Left lung (tissue), 14 donors: ENCODE measurements at regions of chr1 and their contacts with region 1.

Region 1: GRCh38 chr1:109910123-109910962 is at the start of gene CSF1:
- DNase-seq: peak; percentile 80 to 89 (median 83)
- ATAC-seq: peak; percentile 76
- H3K4me3 ChIP-seq: peak within 1 kb of the TSS; percentile 75
- H3K27ac ChIP-seq: peak within 1 kb of the TSS; percentile 68 to 81
- H3K4me1 ChIP-seq: peaks cover 13 to 74% of the 10 kb centered on the region in 2 donors
- H3K27me3 ChIP-seq: peaks cover 0 to 26% of the 10 kb centered on the region in 2 donors
- CTCF ChIP-seq: no peak
- polyA plus RNA-seq, gene CSF1: 6.9 to 12.8 (median 9.1) TPM

Region 2: GRCh38 chr1:109776911-109777310 is 133.4 kb before region 1 on chr1:
- intact Hi-C with region 1: no loop called
- DNase-seq: peak; percentile 77 to 90 (median 83)
- ATAC-seq: peak; percentile 92
- H3K4me3 ChIP-seq: no peak overlapping the region
- H3K27ac ChIP-seq: no peak overlapping the region
- H3K4me1 ChIP-seq: peaks cover 0 to 14% of the 10 kb centered on the region in 2 donors
- H3K27me3 ChIP-seq: no peaks in the 10 kb centered on the region
- CTCF ChIP-seq: peak; percentile 93 to 99

Region 3: DNA sequence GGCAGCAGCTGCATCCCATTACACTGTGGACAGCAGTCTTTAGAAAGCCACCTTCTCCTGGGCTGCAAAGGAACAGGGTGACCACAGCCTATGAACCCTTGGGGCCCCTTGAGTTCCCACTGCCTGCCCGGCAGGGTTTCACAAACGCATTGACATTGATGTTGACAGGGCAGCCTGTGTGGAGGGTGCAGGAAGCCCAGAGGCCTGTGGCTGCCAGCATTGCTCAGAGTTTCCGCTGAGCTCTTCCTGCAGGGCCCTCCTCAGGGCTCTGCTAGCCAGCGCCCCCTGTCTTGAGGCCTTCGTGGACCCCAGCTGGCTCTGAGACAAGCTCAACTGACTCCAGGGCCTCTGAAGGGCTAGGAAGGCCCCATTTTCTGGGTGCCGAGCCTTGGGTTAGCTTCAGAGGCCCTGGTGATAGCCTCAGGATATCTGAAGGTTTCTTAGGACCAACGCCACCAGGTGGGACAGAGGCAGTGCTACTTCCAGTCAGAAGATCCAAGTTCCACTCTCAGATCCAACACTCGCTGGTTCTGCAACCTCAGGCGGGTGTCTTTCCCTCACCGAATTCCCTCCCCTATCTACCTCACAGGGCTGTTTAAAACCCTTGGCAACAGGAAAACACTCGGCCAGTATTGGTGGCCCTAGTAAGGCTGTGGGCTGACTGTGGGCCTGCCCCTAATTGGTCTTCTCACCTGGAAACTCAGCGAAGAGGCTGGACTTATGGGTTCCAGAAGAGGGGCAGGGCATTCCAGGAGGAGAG is 119.4 kb before region 1 on chr1:
- intact Hi-C with region 1: loop called in 1 of 2 experiments (anchors 10 kb)
- DNase-seq: peak in 3 of 4 donors; percentile 54 to 88 (median 77)
- ATAC-seq: peak; percentile 46
- H3K4me3 ChIP-seq: no peak overlapping the region
- H3K27ac ChIP-seq: peak overlapping the region; percentile 30 to 81
- H3K4me1 ChIP-seq: peaks cover 28 to 79% of the 10 kb centered on the region in 2 donors
- H3K27me3 ChIP-seq: no peaks in the 10 kb centered on the region
- CTCF ChIP-seq: peak; percentile 23 to 45

Region 4: DNA sequence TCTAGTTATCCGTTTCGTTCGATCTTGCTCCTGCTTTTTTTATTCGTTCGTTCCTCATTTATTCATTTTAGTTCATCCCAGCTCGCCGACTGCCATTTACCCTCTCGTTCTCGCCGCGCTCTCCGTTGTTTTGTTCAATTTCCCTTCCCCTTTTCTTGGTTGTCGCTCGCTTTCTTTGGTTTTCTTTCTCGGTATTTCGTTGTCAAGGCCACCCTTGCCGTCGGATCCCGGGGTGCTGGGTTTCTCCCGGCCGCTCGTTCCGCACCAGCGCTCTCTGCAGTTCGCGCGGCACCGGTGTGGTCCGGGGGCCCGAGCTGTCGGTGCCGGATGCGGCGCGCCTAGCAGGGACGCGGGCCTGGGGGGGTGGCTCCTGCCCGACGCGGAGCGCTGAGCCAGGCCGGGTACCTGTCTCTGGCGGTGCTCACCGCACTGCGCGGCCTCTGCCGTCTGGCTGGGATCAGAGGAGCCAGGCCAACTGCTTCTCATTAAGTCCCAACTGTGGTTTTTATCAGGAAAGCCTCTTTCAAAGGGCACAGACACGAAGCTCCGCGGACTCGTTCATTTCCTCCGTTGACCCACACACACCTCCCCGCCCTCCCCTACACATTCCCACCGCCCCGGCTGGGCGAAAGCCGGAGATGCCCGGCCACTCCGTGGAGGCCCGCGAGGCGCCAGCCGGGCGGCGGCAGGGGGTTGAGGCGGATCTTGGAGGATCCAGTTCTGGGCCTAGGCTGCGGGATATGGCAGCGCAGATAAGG is 158.5 kb after region 1 on chr1:
- intact Hi-C with region 1: no loop called
- DNase-seq: peak in 1 of 4 donors; percentile 24
- ATAC-seq: peak; percentile 6
- H3K4me3 ChIP-seq: peak overlapping the region in 1 of 2 donors; percentile 0
- H3K27ac ChIP-seq: no peak overlapping the region
- H3K4me1 ChIP-seq: peaks cover 15 to 34% of the 10 kb centered on the region in 2 donors
- H3K27me3 ChIP-seq: peaks cover 62 to 83% of the 10 kb centered on the region in 2 donors
- CTCF ChIP-seq: no peak